ENCODE measurements at regions of chr22 and their contacts with region 1.

Region 1: GRCh38 chr22:36123673-36124630 is 36.6 kb downstream of the APOL3 start:
- DNase-seq: peak; percentile 87
- H3K4me3 ChIP-seq: 0 out of 2 replicates have a peak overlapping the region, but pooled peaks have one; percentile 21
- H3K27ac ChIP-seq: peak overlapping the region; percentile 57
- H3K27me3 ChIP-seq: peaks cover 11% of the 10 kb centered on the region
- CTCF ChIP-seq: peak; percentile 98

Region 2: DNA sequence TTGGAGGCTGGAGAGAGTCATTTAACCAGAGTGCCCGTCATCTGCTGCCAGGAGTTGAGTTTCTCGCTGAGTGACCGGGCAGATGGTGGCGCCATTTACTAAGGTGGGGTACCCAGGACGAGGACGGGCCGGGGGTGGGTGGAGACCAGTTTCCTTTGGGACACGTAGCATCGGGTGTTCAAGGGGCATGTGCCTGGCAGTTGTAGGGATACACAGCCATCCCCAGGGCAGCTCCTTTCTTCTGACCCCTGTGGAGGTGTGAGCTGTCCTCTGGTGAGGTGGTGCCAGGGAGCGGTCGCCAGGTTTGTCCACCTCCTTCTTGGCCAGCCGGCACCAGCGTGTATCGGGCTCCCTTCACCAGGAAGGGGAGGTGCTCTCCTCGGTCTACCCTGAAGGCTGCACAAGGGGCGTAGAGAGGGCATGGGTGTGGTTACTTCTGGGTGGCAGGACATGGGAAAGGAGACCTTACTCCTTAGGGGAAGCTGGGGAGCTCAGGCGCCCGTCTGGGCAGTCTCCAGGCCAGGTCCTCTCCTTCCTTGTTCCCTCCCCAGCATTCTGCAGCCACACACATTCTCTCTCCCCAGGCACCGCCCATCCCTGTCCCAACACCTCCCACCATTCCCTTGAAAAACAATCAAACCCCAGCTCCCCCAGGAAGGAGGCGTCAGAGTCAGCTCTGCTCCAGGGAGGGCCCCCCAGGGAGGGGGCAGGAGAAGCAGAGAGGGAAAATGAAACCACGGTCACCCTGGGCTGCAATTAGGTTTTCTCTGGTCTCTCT is 496.5 kb before region 1 on chr22:
- CTCF ChIA-PET with region 1: interaction called, 16 read pairs
- POLR2A ChIA-PET with region 1: no interaction called
- DNase-seq: peak; percentile 66
- H3K4me3 ChIP-seq: peak overlapping the region; percentile 65
- H3K27ac ChIP-seq: peak overlapping the region; percentile 85
- H3K27me3 ChIP-seq: no peaks in the 10 kb centered on the region
- CTCF ChIP-seq: peak; percentile 52

Region 3: DNA sequence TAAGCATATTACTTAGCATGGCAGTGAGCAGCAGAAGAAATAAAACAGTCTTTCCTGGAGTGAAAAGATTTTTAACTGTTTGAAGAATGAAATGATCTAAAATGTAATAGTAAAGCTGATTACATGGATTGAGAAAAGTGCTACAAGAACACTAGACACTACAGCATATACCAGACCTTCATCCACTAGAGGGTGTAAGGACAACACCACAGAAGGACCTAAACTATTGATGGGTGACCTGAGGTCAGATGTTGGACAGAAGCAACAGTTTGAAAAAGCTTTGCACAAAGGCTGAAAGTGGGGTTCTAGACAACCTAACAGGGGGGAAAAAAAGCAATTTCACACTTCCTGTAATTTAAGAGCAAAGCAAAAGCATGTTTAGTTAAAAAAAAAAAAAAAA is 193.0 kb before region 1 on chr22:
- CTCF ChIA-PET with region 1: interaction called, 14 read pairs
- POLR2A ChIA-PET with region 1: no interaction called
- DNase-seq: peak; percentile 43
- H3K4me3 ChIP-seq: no peak overlapping the region
- H3K27ac ChIP-seq: no peak overlapping the region
- H3K27me3 ChIP-seq: no peaks in the 10 kb centered on the region
- CTCF ChIP-seq: peak; percentile 75

Region 4: DNA sequence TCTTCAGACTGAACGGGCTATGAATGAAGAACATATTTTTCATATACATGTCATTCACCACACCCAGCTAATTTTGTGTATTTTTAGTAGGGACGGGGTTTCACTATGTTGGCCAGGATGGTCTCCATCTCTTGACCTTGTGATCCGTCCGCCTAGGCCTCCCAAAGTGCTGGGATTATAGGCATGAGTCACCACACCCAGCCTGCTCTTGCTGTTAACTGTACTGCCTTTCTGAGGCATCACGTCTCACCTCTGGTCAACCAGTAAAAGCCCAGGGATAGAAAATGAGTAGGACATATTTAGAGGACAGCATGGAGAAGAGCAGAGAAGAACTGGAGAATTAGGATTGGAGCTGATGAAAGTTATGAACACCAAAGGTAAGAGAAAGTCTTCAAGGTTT is 19.0 kb before region 1 on chr22:
- CTCF ChIA-PET with region 1: no interaction called
- POLR2A ChIA-PET with region 1: no interaction called
- DNase-seq: no peak
- H3K4me3 ChIP-seq: no peak overlapping the region
- H3K27ac ChIP-seq: no peak overlapping the region
- H3K27me3 ChIP-seq: peaks cover 2% of the 10 kb centered on the region
- CTCF ChIP-seq: no peak

Measured in AG04450 (cell line).